ENCODE measurements at regions of chr12 and their contacts with region 1.

Region 1: GRCh38 chr12:124940549-124941527 is 26.4 kb upstream of the UBC start:
- DNase-seq: peak; percentile 94
- ATAC-seq: peak; percentile 79

Region 2: DNA sequence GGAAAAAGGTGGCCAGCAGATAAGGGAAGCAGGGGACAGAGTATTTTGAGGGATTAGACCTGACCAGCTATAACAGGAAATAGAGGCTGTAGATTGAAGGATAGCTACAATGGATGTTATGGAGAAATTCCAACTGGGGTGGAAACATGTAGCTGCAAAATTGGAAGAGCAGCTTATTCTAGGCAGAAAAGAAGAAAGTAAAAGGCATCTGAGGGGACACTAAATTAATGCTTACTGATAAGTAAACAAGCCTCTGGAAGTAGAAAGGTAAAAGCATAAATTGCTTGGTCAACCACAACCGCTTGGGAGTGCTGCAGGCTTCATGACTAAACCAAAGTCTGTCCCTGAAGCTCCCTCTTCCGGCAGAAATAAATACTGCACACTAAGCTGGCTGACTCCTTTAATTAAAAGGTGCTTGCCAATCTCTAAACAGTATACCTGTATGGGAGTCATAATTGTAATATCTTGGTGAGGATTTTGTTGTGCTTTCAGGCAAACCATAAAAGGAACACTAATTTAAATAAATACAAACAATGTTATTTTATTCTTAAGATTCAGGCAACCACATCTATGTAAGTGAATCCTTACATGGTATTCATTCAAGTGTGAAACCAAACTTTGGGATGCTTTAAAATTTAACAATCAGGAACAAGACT is 34.1 kb before region 1 on chr12:
- intact Hi-C with region 1: loop called (anchors 2 kb)
- DNase-seq: no peak
- ATAC-seq: peak; percentile 60

Region 3: GRCh38 chr12:124917135-124917840 is 23.6 kb before region 1 on chr12:
- intact Hi-C with region 1: loop called (anchors 1 kb)
- DNase-seq: peak; percentile 99
- ATAC-seq: peak; percentile 94

Region 4: DNA sequence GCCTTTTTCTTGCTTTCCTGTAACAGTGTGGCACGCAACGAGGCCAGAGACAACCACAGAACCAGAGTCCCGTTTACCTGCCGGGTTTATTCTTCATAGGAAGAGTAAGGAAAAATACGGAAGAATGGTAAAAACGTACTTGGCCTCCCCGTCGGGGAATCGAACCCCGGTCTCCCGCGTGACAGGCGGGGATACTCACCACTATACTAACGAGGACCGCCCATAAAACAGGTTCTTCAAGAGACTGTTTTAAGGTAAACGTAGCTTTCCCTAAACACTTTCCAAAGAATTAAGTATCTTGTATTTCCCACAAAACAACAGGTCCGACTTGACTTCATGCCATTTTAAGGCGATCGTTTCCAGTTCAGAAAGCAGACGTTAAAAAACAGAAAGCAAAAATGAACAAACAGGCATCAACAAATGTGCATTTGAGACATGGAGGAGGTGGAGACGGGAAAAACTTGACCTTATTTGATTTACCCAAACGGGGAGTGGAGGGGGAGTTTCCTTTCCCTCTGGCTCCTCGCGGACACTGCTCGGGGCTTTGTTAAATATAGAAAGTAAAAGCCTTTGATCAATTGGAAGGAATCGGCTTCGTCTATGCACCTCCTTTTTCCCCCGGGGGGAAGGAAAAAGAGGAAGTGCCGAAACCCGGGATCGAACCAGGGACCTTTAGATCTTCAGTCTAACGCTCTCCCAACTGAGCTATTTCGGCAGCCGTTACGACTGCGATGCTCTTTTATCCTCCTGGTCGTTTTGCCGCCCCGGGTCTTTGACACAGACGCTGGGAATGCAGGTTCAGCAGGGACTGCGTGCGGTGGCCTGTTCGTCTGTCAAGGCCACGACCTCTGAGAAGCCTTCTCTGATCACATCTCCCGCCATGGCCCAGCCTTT is 13.4 kb before region 1 on chr12:
- intact Hi-C with region 1: loop called (anchors 1 kb)
- DNase-seq: peak; percentile 91
- ATAC-seq: peak; percentile 96

Measured in Right ventricle myocardium inferior (tissue), 1 donor.